SK-N-SH (cell line): ENCODE measurements at regions of chr1 and their contacts with region 1.

Region 1: GRCh38 chr1:77668924-77669449 is 13.5 kb downstream of the ZZZ3 start:
- DNase-seq: no peak
- H3K4me3 ChIP-seq: no peak overlapping the region
- H3K27ac ChIP-seq: no peak overlapping the region
- H3K4me1 ChIP-seq: peaks cover 0 to 26% of the 10 kb centered on the region in 2 experiments
- H3K27me3 ChIP-seq: no peaks in the 10 kb centered on the region
- CTCF ChIP-seq: no peak
- EP300 ChIP-seq: no peak
- RAD21 ChIP-seq: no peak

Region 2: DNA sequence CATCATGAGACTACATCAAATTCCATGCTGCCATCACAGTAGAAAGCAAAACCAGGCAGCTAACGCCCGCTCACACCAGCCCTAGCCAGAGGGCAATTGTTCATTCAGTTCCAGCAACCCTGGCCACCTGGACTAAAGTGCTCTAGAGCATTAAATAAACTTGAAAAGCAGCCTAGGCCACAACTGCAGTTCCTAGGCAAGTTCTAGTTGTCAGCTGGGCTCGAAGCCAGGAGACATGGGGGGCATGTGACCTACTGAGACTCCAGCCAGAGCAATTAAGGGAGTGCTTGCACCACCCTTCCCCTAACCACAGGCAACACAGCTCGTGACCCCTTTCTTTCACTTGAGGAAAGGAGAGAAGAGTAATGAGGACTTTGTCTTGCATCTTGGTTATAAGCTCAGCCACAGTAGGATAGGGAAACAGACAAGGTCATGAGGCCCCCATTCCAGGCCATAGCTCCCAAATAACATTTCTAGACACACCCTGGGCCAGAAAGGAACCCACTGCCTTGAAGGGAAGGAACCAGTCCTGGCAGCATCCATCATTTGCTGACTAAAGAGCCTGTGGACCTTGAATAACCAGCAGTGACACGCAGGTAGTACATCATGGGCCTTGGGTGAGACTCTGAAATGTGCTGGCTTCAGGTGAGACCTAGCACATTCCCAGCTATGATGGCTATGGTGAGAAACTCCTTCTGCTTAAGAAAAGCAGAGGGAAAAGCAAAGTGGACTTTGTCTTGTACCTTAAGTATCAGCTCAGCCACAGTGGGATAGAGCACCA is 63.6 kb before region 1 on chr1:
- CTCF ChIA-PET with region 1: no interaction called
- POLR2A ChIA-PET with region 1: no interaction called
- DNase-seq: no peak
- H3K4me3 ChIP-seq: no peak overlapping the region
- H3K27ac ChIP-seq: no peak overlapping the region
- H3K4me1 ChIP-seq: peaks cover 0 to 9% of the 10 kb centered on the region in 2 experiments; a peak in 2 of 4 replicates
- H3K27me3 ChIP-seq: no peaks in the 10 kb centered on the region
- CTCF ChIP-seq: no peak
- EP300 ChIP-seq: no peak
- RAD21 ChIP-seq: no peak

Region 3: DNA sequence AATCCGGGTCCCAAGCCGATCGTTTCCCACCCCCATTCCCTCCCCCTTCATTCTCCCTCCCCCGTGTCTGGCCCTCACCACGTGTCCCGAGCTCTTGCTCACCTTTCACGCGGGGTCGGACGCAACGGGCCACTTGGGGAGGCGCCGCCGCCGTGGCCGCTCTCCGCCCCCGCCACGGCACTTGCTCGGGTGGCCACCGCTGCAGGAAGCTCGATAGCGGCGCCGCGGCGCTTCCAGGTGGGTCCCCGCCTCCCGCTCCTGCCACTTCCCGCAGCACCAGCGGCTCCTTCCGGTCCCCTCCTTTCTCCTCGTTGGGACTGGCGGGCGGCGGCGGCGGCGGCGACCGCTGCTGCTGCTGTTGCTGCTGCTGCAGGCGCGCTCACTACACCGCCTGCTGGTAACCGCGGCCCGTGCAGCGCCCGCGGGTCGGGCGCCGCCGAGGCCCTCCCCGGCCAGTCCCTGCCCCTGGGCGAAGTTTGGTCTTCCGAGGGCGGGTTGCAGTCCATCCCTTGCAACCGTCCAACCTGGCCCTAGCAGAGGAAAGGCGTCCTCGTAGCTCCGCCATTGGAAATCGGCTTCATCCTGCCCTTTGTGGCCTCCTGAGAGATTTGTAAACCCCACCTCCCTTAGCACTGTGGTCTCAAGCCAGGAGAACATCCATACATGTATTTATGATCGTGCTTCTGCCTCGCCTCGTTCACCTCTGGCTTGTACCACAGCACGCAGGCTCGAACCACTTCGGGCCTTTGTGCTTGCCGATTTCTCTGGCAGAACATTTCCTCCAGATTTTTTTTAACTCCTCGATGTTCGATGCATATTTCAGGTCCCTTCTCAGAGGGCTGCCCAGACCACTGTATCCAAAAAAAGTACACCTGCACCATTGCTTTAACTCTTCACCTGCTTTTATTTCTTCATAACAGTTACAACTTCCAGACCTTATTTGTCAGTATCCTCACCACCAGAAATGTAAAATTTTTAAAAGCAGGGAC is 14.5 kb after region 1 on chr1:
- CTCF ChIA-PET with region 1: interaction called, 11 read pairs
- POLR2A ChIA-PET with region 1: no interaction called
- DNase-seq: peak; percentile 92
- H3K4me3 ChIP-seq: peak overlapping the region; percentile 72 to 94
- H3K27ac ChIP-seq: peak overlapping the region; percentile 97 to 99
- H3K4me1 ChIP-seq: peaks cover 14 to 16% of the 10 kb centered on the region in 2 experiments; a peak in 3 of 4 replicates
- H3K27me3 ChIP-seq: no peaks in the 10 kb centered on the region
- CTCF ChIP-seq: peak; percentile 72
- EP300 ChIP-seq: no peak; a peak in 1 of 4 replicates
- RAD21 ChIP-seq: peak; percentile 62

Region 4: DNA sequence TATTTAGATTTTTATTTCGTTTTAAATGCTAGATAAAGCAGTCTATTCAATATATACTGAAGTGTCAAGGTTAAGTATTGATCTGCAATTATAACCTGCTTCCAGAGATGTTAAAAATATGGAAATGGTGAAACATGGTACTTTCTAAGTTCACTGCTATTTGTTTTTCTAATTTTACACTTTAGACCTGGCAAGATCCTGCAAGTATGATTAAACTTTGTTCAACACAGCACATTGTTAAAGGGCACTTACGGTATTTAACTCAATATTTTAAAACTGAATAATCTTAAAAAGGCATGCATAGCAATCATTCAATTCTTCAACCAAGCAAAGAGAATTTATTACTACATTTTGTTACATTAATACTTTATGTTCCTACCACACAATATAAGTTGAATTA is 49.2 kb after region 1 on chr1:
- CTCF ChIA-PET with region 1: no interaction called
- POLR2A ChIA-PET with region 1: no interaction called
- DNase-seq: no peak
- H3K4me3 ChIP-seq: no peak overlapping the region
- H3K27ac ChIP-seq: no peak overlapping the region
- H3K4me1 ChIP-seq: no peaks in the 10 kb centered on the region
- H3K27me3 ChIP-seq: no peaks in the 10 kb centered on the region
- CTCF ChIP-seq: no peak
- EP300 ChIP-seq: no peak
- RAD21 ChIP-seq: no peak